Adrenal gland (tissue), 19 donors: ENCODE measurements at regions of chr6 and their contacts with region 1.

Region 1: DNA sequence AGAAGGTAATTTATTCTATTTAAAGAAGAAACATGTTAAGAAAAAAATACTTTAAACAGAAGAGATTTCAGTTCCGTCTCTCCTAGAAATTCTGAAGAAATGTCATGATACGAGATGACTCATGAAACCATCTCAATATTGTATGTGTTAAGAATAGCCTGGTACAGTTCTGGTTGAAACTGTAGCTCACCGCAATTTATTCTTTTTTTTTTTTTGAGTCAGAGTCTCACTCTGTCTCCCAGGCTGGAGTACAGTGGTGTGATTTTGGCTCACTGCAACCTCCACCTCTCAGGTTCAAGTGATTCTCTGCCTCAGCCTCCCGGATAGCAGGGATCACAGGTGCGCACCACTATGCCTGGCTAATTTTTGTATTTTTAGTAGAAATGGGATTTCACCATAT is 103.3 kb downstream of the ARHGAP18 start:
- DNase-seq: no peak
- H3K4me3 ChIP-seq: no peak overlapping the region
- H3K27ac ChIP-seq: no peak overlapping the region
- H3K4me1 ChIP-seq: peaks cover 6 to 21% of the 10 kb centered on the region in 2 donors
- H3K27me3 ChIP-seq: no peaks in the 10 kb centered on the region
- CTCF ChIP-seq: no peak
- POLR2A ChIP-seq: no peak

Region 2: DNA sequence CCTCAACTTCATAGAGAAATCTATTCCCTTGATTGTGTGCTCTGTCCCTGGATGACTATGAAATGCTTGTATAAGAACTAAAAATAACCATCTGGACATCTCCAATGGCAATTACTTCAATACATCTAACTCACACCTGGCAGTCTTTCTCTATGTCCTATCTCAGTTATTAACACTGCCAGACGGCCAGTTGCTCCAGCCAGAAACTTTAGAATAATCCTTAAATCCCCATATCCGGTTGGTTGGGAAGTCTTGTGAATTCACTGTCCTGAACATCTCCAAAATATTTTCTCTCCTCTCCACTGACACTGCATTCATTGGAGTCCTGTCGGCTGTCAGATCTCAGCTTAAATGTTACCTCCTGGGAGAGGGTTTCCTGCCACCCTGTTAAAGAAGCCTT is 735.9 kb before region 1 on chr6:
- intact Hi-C with region 1: no loop called
- DNase-seq: no peak
- H3K4me3 ChIP-seq: no peak overlapping the region
- H3K27ac ChIP-seq: no peak overlapping the region
- H3K4me1 ChIP-seq: no peaks in the 10 kb centered on the region
- H3K27me3 ChIP-seq: no peaks in the 10 kb centered on the region
- CTCF ChIP-seq: no peak
- POLR2A ChIP-seq: no peak

Region 3: GRCh38 chr6:129646642-129647041 is 40.0 kb after region 1 on chr6:
- intact Hi-C with region 1: no loop called
- DNase-seq: no peak
- H3K4me3 ChIP-seq: no peak overlapping the region
- H3K27ac ChIP-seq: peak overlapping the region in 3 of 5 donors; percentile 14 to 77 (median 17)
- H3K4me1 ChIP-seq: peaks cover 42 to 65% of the 10 kb centered on the region in 2 donors
- H3K27me3 ChIP-seq: no peaks in the 10 kb centered on the region
- CTCF ChIP-seq: no peak
- POLR2A ChIP-seq: no peak

Region 4: GRCh38 chr6:129893640-129894039 is 287.0 kb after region 1 on chr6:
- intact Hi-C with region 1: no loop called
- DNase-seq: no peak
- H3K4me3 ChIP-seq: no peak overlapping the region
- H3K27ac ChIP-seq: no peak overlapping the region
- H3K4me1 ChIP-seq: no peaks in the 10 kb centered on the region
- H3K27me3 ChIP-seq: no peaks in the 10 kb centered on the region
- CTCF ChIP-seq: peak in 5 of 6 experiments; percentile 14 to 50 (median 43)
- POLR2A ChIP-seq: no peak

Region 5: GRCh38 chr6:130020907-130021629 is 414.4 kb after region 1 on chr6:
- intact Hi-C with region 1: loop called in 1 of 2 experiments (anchors 10 kb)
- DNase-seq: peak; percentile 88 to 96 (median 90)
- H3K4me3 ChIP-seq: peak overlapping the region in 3 of 4 donors; percentile 36 to 93 (median 87)
- H3K27ac ChIP-seq: peak overlapping the region; percentile 82 to 97 (median 95)
- H3K4me1 ChIP-seq: peaks cover 0 to 15% of the 10 kb centered on the region in 2 donors
- H3K27me3 ChIP-seq: no peaks in the 10 kb centered on the region
- CTCF ChIP-seq: peak; percentile 64 to 90 (median 88)
- POLR2A ChIP-seq: peak in 1 of 2 donors; percentile 71

Region 6: GRCh38 chr6:130054725-130055124 is 448.1 kb after region 1 on chr6:
- intact Hi-C with region 1: no loop called
- DNase-seq: no peak
- H3K4me3 ChIP-seq: no peak overlapping the region
- H3K27ac ChIP-seq: no peak overlapping the region
- H3K4me1 ChIP-seq: peaks cover 10 to 11% of the 10 kb centered on the region in 2 donors
- H3K27me3 ChIP-seq: no peaks in the 10 kb centered on the region
- CTCF ChIP-seq: no peak
- POLR2A ChIP-seq: no peak